Lower lobe of right lung (tissue), 2 donors: ENCODE measurements at regions of chr2 and their contacts with region 1.

Region 1: GRCh38 chr2:231612179-231613053 is 19.8 kb downstream of the TEX44 start:
- DNase-seq: peak; percentile 95
- ATAC-seq: peak; percentile 79 to 88
- H3K4me3 ChIP-seq: peak overlapping the region; percentile 56
- H3K27ac ChIP-seq: peak overlapping the region; percentile 98
- H3K4me1 ChIP-seq: peaks cover 36% of the 10 kb centered on the region
- H3K27me3 ChIP-seq: no peaks in the 10 kb centered on the region
- CTCF ChIP-seq: peak; percentile 98

Region 2: GRCh38 chr2:231662028-231662810 is 49.8 kb after region 1 on chr2:
- intact Hi-C with region 1: loop called (anchors 10 kb)
- DNase-seq: peak; percentile 97
- ATAC-seq: peak; percentile 85 to 93
- H3K4me3 ChIP-seq: peak overlapping the region; percentile 51
- H3K27ac ChIP-seq: peak overlapping the region; percentile 96
- H3K4me1 ChIP-seq: peaks cover 30% of the 10 kb centered on the region
- H3K27me3 ChIP-seq: no peaks in the 10 kb centered on the region
- CTCF ChIP-seq: no peak

Region 3: DNA sequence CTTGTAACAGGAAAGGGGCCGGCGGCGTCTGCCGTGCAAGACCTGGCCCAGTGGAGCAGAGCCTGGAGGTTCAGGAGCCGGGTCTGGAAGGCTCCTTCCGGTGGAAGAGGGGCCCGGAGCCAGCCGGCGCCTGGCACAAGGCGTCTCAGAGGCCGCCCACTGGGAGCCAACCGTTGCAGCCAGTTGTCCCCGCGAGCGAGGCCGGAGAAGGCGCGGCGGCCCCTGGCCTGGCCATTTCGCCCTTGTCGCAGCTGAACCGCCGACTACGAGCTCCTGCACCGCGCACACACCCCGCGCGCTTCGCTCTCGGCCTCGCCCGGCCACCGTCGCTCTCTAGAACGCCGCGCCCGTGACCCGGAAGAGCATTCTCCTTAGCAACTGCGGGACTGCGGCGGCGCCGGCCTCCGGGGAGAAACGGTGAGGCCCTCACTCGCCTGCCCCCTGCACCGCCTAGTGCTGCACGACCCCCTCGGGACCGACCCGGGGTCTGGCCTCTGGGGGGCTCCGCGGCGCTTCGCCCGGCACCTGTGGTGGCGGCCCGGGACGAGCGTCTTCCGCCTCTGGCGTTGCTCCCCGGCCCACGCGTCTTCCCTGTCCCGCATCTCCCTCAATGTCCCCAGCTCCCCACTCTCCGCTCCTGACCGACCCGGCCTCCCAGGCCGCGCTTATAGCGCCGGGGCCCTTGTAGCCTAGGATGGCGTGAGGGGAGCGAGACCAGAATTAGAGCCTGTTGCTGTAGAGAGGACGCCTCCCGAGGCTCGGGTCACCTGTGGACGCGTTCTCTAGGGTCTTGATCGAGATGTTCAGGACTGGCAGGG is 349.1 kb after region 1 on chr2 and contains the start of gene DIS3L2:
- intact Hi-C with region 1: no loop called
- DNase-seq: peak; percentile 93
- ATAC-seq: peak; percentile 98
- H3K4me3 ChIP-seq: peak within 1 kb of the TSS; percentile 89
- H3K27ac ChIP-seq: peak within 1 kb of the TSS; percentile 88
- H3K4me1 ChIP-seq: peaks cover 16% of the 10 kb centered on the region
- H3K27me3 ChIP-seq: no peaks in the 10 kb centered on the region
- CTCF ChIP-seq: no peak
- total RNA-seq, gene DIS3L2: 34.4 TPM